ENCODE measurements at regions of chr17 and their contacts with region 1.

Region 1: GRCh38 chr17:36545465-36546417 is 1.0 kb downstream of the GGNBP2 start:
- DNase-seq: peak; percentile 84
- H3K4me3 ChIP-seq: peak overlapping the region; percentile 92
- CTCF ChIP-seq: no peak

Region 2: DNA sequence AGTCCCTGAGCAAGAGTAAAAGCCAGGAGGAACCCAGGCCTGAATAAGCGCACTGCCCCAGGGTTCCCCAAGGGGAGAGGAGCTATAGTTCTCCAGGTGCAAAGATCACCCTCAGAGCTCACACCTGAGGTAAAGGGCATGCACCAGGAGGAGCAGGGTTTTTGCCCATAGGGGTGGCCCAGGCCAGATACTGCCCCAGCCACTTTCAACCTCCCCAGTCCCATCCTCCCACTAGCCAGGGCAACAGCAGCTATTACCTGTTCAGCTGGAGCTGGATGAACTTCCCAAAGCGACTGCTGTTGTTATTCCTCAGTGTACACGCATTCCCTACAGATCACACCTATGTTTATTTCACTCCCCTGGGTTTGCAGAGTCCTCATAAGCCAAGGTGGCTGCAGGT is 30.9 kb before region 1 on chr17:
- CTCF ChIA-PET with region 1: no interaction called
- POLR2A ChIA-PET with region 1: no interaction called
- DNase-seq: no peak
- H3K4me3 ChIP-seq: no peak overlapping the region
- CTCF ChIP-seq: no peak

Region 3: DNA sequence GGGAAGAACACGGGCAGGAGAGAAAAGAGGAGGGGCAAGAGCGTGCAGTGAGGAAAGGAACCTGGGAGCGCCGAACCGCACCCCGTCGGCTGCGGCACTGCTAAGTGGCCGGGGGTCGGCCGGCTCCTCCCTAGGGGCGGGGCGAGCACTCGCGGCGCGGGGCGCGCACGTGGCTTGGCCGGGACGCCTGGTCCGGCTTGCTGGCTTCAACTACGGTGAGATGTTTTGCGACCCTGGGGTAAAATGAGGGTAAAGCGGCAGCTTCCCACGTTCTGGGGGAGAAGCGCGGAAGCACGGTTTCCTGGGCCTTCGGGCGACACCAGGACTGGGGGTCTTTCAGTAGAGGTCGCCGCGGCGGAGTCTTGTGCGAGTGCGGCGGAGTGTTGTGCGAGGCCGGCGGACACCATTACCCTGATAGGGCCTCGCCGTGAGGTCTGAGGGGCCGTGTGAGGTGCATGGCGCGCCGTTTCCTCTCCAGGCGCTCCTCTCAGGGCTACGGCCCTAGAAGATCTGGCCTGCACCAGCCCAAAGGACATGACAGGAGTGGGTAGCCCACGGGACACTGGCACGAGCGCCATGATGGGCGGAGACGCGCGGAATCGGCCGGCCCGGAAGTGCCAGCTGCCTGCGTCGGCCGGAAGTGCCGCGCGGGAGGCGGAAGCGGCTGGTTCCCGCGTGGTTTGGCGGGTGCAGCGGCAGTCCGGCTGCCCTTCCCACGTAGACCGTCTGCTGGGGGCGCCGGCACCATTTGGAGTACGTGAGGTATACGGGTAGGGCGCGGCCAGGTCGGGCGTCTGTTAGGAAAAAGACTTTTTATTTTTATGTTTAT is 10.7 kb before region 1 on chr17 and contains the starts of genes MYO19 and PIGW:
- CTCF ChIA-PET with region 1: interaction called, 4 read pairs
- POLR2A ChIA-PET with region 1: interaction called, 19 read pairs
- DNase-seq: no peak
- H3K4me3 ChIP-seq: peak within 1 kb of the TSS; percentile 94
- CTCF ChIP-seq: no peak